B cell (primary cell): ENCODE measurements at regions of chr3 and their contacts with region 1.

Region 1: DNA sequence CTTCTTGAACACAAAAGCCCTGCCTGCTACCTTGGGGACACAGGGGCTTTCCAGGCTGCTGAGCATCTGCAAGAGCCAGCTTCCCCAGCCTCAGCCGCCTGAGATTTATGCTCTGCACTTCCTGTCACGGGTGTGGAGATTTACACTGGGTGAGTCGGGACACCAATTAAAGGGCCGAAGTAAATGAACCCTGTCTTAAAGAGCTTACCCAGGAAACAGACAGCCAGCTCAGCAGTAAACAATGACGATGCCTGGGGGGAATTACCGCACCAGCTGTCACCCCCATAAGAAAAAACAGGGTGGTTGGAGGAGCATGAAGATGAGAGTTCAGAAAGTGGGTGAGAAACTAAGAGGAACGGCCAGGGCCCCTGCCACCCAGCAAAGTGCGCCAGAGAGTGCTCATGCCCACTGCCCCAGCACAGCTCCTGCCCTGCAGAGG is 37.5 kb upstream of the IQSEC1 start:
- DNase-seq: peak; percentile 98
- ATAC-seq: peak; percentile 86
- H3K4me3 ChIP-seq: peak overlapping the region in 4 of 5 experiments; percentile 13 to 24 (median 16)
- H3K4me3 Mint-ChIP-seq: peak overlapping the region; percentile 64
- H3K27ac ChIP-seq: peak overlapping the region; percentile 98 to 99
- H3K27ac Mint-ChIP-seq: peak overlapping the region; percentile 96
- H3K4me1 ChIP-seq: peaks cover 59 to 62% of the 10 kb centered on the region in 2 donors
- H3K4me1 Mint-ChIP-seq: peaks cover 58% of the 10 kb centered on the region
- H3K27me3 ChIP-seq: peaks cover 0 to under 1% (median 0%) of the 10 kb centered on the region in 4 experiments
- H3K27me3 Mint-ChIP-seq: no peaks in the 10 kb centered on the region
- CTCF ChIP-seq: no peak

Region 2: DNA sequence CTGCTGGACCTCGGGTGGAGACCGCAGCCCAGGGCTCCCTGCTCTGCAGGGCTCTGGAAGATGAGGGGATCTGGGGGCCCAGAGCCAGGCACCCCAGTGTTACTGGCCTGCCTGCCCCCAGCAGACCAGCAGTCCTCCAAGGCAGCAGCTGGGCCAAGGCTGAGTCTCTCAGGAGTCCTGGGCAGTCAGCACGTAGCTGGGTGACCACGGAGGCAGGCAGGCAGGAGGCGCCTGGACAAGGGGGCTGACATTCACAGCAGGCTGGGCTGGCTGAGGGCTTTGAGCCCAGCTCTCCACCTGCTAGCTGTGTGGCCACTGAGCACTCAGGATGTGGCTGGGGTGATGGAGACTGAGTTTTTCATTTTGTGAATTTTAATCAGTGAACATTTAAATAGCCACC is 105.4 kb before region 1 on chr3:
- CTCF ChIA-PET with region 1: no interaction called
- POLR2A ChIA-PET with region 1: no interaction called
- intact Hi-C with region 1: no loop called
- DNase-seq: no peak
- ATAC-seq: no peak
- H3K4me3 ChIP-seq: no peak overlapping the region
- H3K4me3 Mint-ChIP-seq: peak overlapping the region; percentile 65
- H3K27ac ChIP-seq: peak overlapping the region; percentile 57 to 97
- H3K27ac Mint-ChIP-seq: peak overlapping the region; percentile 95
- H3K4me1 ChIP-seq: peaks cover 99 to 100% of the 10 kb centered on the region in 2 donors
- H3K4me1 Mint-ChIP-seq: peaks cover 97% of the 10 kb centered on the region
- H3K27me3 ChIP-seq: no peaks in the 10 kb centered on the region
- H3K27me3 Mint-ChIP-seq: no peaks in the 10 kb centered on the region
- CTCF ChIP-seq: no peak

Region 3: GRCh38 chr3:13022348-13023234 is 88.1 kb before region 1 on chr3:
- CTCF ChIA-PET with region 1: interaction called, 3 read pairs
- POLR2A ChIA-PET with region 1: no interaction called
- intact Hi-C with region 1: loop called (anchors 5 kb)
- DNase-seq: peak; percentile 72
- ATAC-seq: peak; percentile 62
- H3K4me3 ChIP-seq: peak overlapping the region; percentile 81 to 98 (median 88)
- H3K4me3 Mint-ChIP-seq: peak overlapping the region; percentile 100
- H3K27ac ChIP-seq: peak overlapping the region; percentile 96 to 97
- H3K27ac Mint-ChIP-seq: peak overlapping the region; percentile 95
- H3K4me1 ChIP-seq: peaks cover 45 to 55% of the 10 kb centered on the region in 2 donors
- H3K4me1 Mint-ChIP-seq: peaks cover 78% of the 10 kb centered on the region
- H3K27me3 ChIP-seq: no peaks in the 10 kb centered on the region
- H3K27me3 Mint-ChIP-seq: no peaks in the 10 kb centered on the region
- CTCF ChIP-seq: no peak

Region 4: GRCh38 chr3:13045904-13046568 is 64.7 kb before region 1 on chr3:
- CTCF ChIA-PET with region 1: interaction called, 3 read pairs
- POLR2A ChIA-PET with region 1: interaction called, 3 read pairs
- intact Hi-C with region 1: loop called (anchors 1 kb)
- DNase-seq: peak; percentile 90
- ATAC-seq: peak; percentile 92
- H3K4me3 ChIP-seq: peak overlapping the region in 2 of 5 experiments; percentile 26 to 42
- H3K4me3 Mint-ChIP-seq: peak overlapping the region; percentile 90
- H3K27ac ChIP-seq: peak overlapping the region; percentile 89
- H3K27ac Mint-ChIP-seq: peak overlapping the region; percentile 87
- H3K4me1 ChIP-seq: peaks cover 63 to 71% of the 10 kb centered on the region in 2 donors
- H3K4me1 Mint-ChIP-seq: peaks cover 70% of the 10 kb centered on the region
- H3K27me3 ChIP-seq: no peaks in the 10 kb centered on the region
- H3K27me3 Mint-ChIP-seq: no peaks in the 10 kb centered on the region
- CTCF ChIP-seq: no peak

Region 5: GRCh38 chr3:13235079-13235478 is 124.4 kb after region 1 on chr3:
- CTCF ChIA-PET with region 1: no interaction called
- POLR2A ChIA-PET with region 1: no interaction called
- intact Hi-C with region 1: loop called (anchors 10 kb)
- DNase-seq: peak; percentile 35
- ATAC-seq: peak; percentile 88
- H3K4me3 ChIP-seq: peak overlapping the region in 2 of 5 experiments; percentile 9 to 46
- H3K4me3 Mint-ChIP-seq: peak overlapping the region; percentile 72
- H3K27ac ChIP-seq: no peak overlapping the region
- H3K27ac Mint-ChIP-seq: peak overlapping the region; percentile 23
- H3K4me1 ChIP-seq: peaks cover 31 to 39% of the 10 kb centered on the region in 2 donors
- H3K4me1 Mint-ChIP-seq: peaks cover 41% of the 10 kb centered on the region
- H3K27me3 ChIP-seq: peaks cover 0 to 14% (median 0%) of the 10 kb centered on the region in 4 experiments
- H3K27me3 Mint-ChIP-seq: peaks cover 9% of the 10 kb centered on the region
- CTCF ChIP-seq: no peak

Region 6: GRCh38 chr3:13332158-13332557 is 221.5 kb after region 1 on chr3:
- CTCF ChIA-PET with region 1: no interaction called
- POLR2A ChIA-PET with region 1: interaction called, 9 read pairs
- intact Hi-C with region 1: loop called (anchors 1 kb)
- DNase-seq: peak; percentile 87
- ATAC-seq: peak; percentile 89
- H3K4me3 ChIP-seq: no peak overlapping the region
- H3K4me3 Mint-ChIP-seq: peak overlapping the region; percentile 62
- H3K27ac ChIP-seq: peak overlapping the region; percentile 46 to 64
- H3K27ac Mint-ChIP-seq: peak overlapping the region; percentile 87
- H3K4me1 ChIP-seq: peaks cover 27 to 41% of the 10 kb centered on the region in 2 donors
- H3K4me1 Mint-ChIP-seq: peaks cover 40% of the 10 kb centered on the region
- H3K27me3 ChIP-seq: no peaks in the 10 kb centered on the region
- H3K27me3 Mint-ChIP-seq: no peaks in the 10 kb centered on the region
- CTCF ChIP-seq: no peak

Region 7: DNA sequence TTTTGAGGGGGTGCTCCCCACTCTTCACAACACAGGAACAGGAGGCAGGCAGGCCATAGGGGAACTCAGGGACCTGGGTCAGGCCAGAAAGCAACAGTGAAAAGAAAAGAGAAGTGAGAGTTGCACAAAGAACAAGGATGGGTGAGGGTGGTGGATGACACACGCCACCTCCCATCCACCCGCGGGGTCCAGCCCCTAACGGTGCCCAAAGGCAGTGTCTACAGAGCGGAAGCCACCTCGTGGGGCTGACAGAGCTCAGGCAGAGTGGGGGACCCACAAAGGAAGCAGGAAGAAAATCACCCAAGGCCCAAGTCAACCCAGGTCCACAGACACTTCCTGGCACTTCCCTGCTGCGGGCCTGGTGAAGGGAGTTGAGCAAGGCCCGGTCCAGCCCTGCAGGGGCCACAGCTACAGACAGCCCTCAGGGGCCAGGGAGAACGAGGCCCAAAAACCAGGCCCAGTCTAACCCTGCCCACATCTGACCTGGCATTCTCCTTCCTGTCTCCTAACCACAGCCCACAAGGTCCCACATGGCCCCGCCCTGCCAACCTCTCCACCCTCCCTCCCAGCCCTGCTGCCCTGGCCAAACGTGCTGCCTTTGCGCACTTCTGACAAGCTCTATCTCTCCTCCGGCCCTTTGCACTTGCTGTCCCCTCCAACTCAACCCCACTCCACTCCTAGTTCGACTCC is 303.5 kb after region 1 on chr3:
- CTCF ChIA-PET with region 1: interaction called, 3 read pairs
- POLR2A ChIA-PET with region 1: interaction called, 4 read pairs
- intact Hi-C with region 1: loop called (anchors 1 kb)
- DNase-seq: peak; percentile 94
- ATAC-seq: peak; percentile 92
- H3K4me3 ChIP-seq: peak overlapping the region in 4 of 5 experiments; percentile 21 to 33 (median 29)
- H3K4me3 Mint-ChIP-seq: peak overlapping the region; percentile 73
- H3K27ac ChIP-seq: peak overlapping the region; percentile 90 to 91
- H3K27ac Mint-ChIP-seq: peak overlapping the region; percentile 98
- H3K4me1 ChIP-seq: peaks cover 60 to 72% of the 10 kb centered on the region in 2 donors
- H3K4me1 Mint-ChIP-seq: peaks cover 61% of the 10 kb centered on the region
- H3K27me3 ChIP-seq: no peaks in the 10 kb centered on the region
- H3K27me3 Mint-ChIP-seq: no peaks in the 10 kb centered on the region
- CTCF ChIP-seq: peak; percentile 26

Region 8: GRCh38 chr3:14947886-14948555 is 1837.3 kb after region 1 on chr3:
- CTCF ChIA-PET with region 1: no interaction called
- POLR2A ChIA-PET with region 1: interaction called, 9 read pairs
- intact Hi-C with region 1: loop called (anchors 5 kb)
- DNase-seq: peak; percentile 98
- ATAC-seq: peak; percentile 86
- H3K4me3 ChIP-seq: peak overlapping the region; percentile 30 to 100 (median 94)
- H3K4me3 Mint-ChIP-seq: peak overlapping the region; percentile 99
- H3K27ac ChIP-seq: peak overlapping the region; percentile 98 to 99
- H3K27ac Mint-ChIP-seq: peak overlapping the region; percentile 100
- H3K4me1 ChIP-seq: peaks cover 25 to 29% of the 10 kb centered on the region in 2 donors
- H3K4me1 Mint-ChIP-seq: peaks cover 49% of the 10 kb centered on the region
- H3K27me3 ChIP-seq: no peaks in the 10 kb centered on the region
- H3K27me3 Mint-ChIP-seq: no peaks in the 10 kb centered on the region
- CTCF ChIP-seq: no peak